PC-3 (cell line): ENCODE measurements at regions of chr20 and their contacts with region 1.

Region 1: GRCh38 chr20:1509237-1509636 is 18.0 kb upstream of the SIRPB2 start:
- DNase-seq: peak; percentile 90
- ATAC-seq: peak; percentile 85
- H3K4me3 ChIP-seq: no peak overlapping the region
- H3K27ac ChIP-seq: peak overlapping the region; percentile 41
- H3K4me1 ChIP-seq: peaks cover 50% of the 10 kb centered on the region
- H3K27me3 ChIP-seq: no peaks in the 10 kb centered on the region
- CTCF ChIP-seq: peak; percentile 89

Region 2: DNA sequence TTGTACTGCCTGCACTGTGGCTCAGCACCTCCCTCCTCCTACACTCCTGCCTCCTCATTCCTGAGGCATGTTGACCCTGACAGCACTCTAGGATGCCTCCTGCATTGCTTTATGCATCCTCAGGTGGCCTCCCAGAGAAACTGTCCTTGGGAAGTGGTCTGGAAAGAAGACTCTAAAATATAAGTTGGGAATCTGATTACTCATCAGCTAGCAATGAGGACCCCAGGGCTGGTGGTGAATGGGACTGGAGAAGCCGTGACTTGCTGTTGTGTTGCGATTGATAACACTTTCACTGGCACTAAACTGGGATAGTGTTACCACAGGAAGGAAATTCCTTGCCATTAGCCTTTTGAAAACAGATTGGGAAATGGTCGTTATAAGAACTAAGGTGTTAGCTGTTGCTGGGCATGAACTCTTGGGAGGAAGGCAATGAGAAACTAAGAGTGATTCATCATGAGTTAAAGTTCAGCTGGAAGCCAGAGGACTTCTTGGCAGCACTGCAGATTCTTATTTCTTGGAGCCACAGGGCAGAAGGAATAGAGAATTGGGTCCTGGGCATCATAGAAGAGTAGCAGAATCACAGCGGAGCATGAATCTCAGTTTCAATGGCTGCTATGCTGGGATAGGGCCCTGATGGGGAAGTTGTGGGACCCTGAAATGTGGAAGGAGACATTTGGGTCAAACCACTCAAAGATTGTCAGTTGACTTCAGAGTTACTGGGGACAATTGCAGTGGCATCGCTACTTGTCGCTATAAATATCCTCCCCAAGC is 58.3 kb after region 1 on chr20:
- CTCF ChIA-PET with region 1: interaction called, 3 read pairs
- POLR2A ChIA-PET with region 1: no interaction called
- intact Hi-C with region 1: loop called (anchors 2 kb)
- DNase-seq: peak; percentile 99
- ATAC-seq: peak; percentile 79
- H3K4me3 ChIP-seq: no peak overlapping the region
- H3K27ac ChIP-seq: peak overlapping the region; percentile 98
- H3K4me1 ChIP-seq: peaks cover 47% of the 10 kb centered on the region
- H3K27me3 ChIP-seq: no peaks in the 10 kb centered on the region
- CTCF ChIP-seq: no peak

Region 3: GRCh38 chr20:1718604-1719384 is 209.6 kb after region 1 on chr20:
- CTCF ChIA-PET with region 1: no interaction called
- POLR2A ChIA-PET with region 1: no interaction called
- intact Hi-C with region 1: loop called (anchors 1 kb)
- DNase-seq: peak; percentile 99
- ATAC-seq: peak; percentile 96
- H3K4me3 ChIP-seq: 0 out of 2 replicates have a peak overlapping the region, but pooled peaks have one; percentile 15
- H3K27ac ChIP-seq: peak overlapping the region; percentile 97
- H3K4me1 ChIP-seq: peaks cover 61% of the 10 kb centered on the region
- H3K27me3 ChIP-seq: no peaks in the 10 kb centered on the region
- CTCF ChIP-seq: no peak

Region 4: DNA sequence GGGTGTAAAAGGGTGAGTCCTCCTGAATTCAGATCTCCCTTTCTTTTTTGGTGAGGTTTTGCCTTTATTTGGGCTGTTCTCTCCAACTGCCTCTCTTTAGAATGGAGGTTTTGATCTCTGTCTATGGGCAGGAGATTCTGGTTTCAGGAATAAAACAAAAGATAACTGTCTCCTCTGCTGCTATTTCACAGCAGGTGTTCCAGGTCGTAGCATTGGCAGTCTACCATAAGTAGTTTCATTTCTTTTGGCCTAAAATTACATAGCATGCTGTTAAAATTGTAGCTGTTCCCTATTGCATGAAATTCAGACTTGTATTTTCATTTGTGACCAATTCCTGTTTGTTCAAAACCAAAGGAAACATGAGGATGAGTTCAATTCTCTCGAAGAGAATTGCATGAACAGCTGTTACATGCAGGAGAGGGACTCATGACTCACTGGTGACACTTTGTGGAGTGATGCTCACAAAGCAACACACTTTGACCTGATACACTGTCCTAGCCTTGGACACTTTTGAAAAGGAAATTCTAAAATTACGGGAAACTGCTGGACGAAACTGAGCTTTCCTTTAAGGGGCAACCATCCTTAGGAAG is 225.1 kb after region 1 on chr20:
- CTCF ChIA-PET with region 1: interaction called, 27 read pairs
- POLR2A ChIA-PET with region 1: no interaction called
- intact Hi-C with region 1: loop called (anchors 1 kb)
- DNase-seq: peak; percentile 79
- ATAC-seq: peak; percentile 97
- H3K4me3 ChIP-seq: no peak overlapping the region
- H3K27ac ChIP-seq: peak overlapping the region; percentile 62
- H3K4me1 ChIP-seq: peaks cover 19% of the 10 kb centered on the region
- H3K27me3 ChIP-seq: no peaks in the 10 kb centered on the region
- CTCF ChIP-seq: peak; percentile 84

Region 5: DNA sequence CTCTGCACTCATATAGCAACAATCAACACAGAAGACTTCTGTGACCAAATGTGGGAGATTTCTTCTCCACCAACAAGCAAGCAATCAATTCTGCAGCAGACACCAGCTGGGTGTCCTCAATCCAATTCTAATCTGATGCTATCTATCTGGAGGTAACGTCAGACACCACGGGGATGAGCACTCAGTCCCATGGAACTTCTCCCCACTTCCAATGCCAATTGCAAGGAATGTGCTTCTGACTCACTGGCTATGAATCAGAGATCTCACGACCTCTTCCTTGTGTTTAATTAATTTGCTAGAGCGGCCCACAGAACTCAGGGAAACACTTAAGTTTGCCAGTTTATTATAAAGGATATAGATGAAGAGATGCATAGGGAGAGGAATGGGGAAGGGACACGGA is 251.9 kb after region 1 on chr20:
- CTCF ChIA-PET with region 1: no interaction called
- POLR2A ChIA-PET with region 1: no interaction called
- intact Hi-C with region 1: no loop called
- DNase-seq: peak; percentile 93
- ATAC-seq: peak; percentile 79
- H3K4me3 ChIP-seq: no peak overlapping the region
- H3K27ac ChIP-seq: peak overlapping the region; percentile 64
- H3K4me1 ChIP-seq: peaks cover 45% of the 10 kb centered on the region
- H3K27me3 ChIP-seq: no peaks in the 10 kb centered on the region
- CTCF ChIP-seq: no peak